ENCODE measurements at regions of chr20 and their contacts with region 1.

Region 1: DNA sequence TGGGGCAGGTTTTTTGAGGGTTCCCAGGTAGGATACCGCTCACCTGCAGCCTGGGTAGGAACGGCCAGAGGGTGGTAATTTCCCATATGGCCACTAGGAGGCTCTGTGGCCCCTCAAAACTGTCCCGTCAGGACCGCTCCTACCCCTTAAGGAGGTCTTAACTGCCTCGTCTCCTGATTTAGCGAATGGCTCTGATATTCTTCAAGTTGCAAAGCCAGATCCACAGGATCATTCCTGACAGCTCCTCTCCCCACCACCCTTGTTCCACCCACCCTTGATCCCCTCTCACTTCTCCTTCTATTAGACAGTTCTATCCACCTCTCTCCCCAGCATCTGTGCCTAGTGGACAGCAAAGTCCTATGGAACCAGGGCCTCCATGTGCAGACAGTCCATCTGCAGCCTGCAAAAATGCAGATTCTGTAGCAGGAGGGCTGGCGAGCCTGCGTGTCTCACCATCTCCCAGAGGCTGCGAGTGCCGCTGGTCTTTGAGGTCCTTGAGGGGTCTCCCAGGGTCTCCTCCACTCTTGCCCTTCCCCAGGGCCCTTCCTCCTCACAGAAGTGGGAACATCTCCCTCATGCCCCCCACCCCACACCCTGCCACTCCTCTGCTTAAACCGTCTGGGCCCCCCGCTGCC is 34.3 kb upstream of the ZBP1 start:
- DNase-seq: peak; percentile 58 to 85
- H3K4me3 ChIP-seq: no peak overlapping the region
- H3K27ac ChIP-seq: no peak overlapping the region
- H3K4me1 ChIP-seq: peaks cover 0 to 20% (median 14%) of the 10 kb centered on the region in 4 donors
- H3K27me3 ChIP-seq: no peaks in the 10 kb centered on the region
- CTCF ChIP-seq: peak in 5 of 7 experiments; percentile 88 to 95 (median 89)
- EP300 ChIP-seq: no peak
- POLR2A ChIP-seq: no peak

Region 2: DNA sequence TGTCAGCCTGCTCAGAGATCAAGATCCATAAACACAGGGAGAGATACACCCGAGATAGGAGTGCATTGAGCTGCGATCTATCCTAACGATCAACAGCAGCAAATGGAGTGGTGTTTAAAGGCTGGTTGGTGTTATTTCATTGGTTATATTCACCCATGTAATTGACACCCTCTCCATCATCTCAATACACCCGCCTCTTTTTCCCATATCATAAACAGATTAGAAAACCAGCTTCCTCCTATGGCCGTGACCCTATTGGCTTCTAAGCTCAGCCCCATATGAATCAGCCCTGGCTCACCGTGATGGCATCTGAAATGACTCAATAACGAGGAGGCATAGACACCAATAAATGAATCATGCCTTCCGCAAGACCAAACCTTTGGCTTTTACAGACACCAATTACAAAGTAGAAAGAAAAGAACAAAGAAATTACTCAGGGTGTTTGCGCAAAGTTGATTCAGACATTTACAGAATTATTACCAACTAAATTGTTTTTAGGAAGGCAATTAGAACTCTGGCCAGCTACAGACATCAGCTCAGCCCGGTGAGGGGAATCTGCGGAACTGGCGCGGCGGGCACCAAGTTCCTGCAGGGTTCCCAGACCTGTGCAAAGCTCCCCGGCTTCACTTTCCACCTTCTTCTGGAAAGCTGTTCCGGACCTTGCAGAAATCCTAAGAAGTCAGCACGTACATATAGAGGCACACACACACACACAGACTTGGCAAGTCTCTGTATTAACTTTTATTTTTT is 43.8 kb after region 1 on chr20:
- intact Hi-C with region 1: no loop called
- DNase-seq: peak in 1 of 2 donors; percentile 40
- H3K4me3 ChIP-seq: no peak overlapping the region
- H3K27ac ChIP-seq: peak overlapping the region in 2 of 5 donors; percentile 29 to 44
- H3K4me1 ChIP-seq: peaks cover 18 to 50% (median 34%) of the 10 kb centered on the region in 4 donors
- H3K27me3 ChIP-seq: no peaks in the 10 kb centered on the region
- CTCF ChIP-seq: no peak
- EP300 ChIP-seq: no peak
- POLR2A ChIP-seq: no peak

Region 3: DNA sequence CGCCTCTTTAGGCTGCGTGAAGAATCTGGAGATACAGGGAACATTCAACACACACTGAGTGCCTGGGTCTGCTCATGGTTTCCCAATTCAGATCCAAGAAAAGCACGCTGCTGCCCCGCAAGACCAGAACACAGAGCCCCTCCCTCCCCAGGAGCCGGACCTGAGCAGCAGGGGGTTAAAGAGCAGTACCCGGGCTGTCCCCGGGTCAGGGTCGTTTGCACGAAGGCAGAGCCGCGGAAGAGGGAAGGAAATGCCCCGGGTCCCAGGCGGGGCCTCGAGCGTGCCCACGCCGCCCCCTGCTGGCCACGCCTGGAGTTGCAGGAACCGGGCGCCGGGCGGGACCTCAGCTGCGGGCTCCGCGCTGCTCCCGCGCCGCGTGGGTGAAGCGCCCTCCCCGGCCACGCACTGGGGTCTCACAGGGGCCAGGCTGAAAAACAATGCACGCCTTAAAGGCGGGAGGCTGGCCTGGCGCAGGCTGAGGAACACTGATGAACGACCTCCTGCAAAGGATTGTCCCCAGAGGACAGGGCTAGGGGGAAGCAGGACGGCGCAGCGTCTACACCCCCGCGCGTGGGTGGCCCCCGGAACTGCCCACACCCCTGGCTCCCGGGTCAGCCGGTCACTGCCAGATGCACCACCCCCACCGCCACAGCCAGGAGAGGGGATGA is 525.1 kb after region 1 on chr20:
- intact Hi-C with region 1: loop called (anchors 5 kb)
- DNase-seq: peak; percentile 57 to 82
- H3K4me3 ChIP-seq: peak overlapping the region; percentile 26 to 34 (median 31)
- H3K27ac ChIP-seq: no peak overlapping the region
- H3K4me1 ChIP-seq: peaks cover 7 to 25% (median 14%) of the 10 kb centered on the region in 4 donors
- H3K27me3 ChIP-seq: peaks cover 0 to 57% (median 13%) of the 10 kb centered on the region in 3 donors
- CTCF ChIP-seq: peak in 6 of 7 experiments; percentile 16 to 100 (median 92)
- EP300 ChIP-seq: no peak
- POLR2A ChIP-seq: no peak

Measured in stomach (tissue), 19 donors.